T-cell (primary cell): ENCODE measurements at regions of chr20 and their contacts with region 1.

Region 1: DNA sequence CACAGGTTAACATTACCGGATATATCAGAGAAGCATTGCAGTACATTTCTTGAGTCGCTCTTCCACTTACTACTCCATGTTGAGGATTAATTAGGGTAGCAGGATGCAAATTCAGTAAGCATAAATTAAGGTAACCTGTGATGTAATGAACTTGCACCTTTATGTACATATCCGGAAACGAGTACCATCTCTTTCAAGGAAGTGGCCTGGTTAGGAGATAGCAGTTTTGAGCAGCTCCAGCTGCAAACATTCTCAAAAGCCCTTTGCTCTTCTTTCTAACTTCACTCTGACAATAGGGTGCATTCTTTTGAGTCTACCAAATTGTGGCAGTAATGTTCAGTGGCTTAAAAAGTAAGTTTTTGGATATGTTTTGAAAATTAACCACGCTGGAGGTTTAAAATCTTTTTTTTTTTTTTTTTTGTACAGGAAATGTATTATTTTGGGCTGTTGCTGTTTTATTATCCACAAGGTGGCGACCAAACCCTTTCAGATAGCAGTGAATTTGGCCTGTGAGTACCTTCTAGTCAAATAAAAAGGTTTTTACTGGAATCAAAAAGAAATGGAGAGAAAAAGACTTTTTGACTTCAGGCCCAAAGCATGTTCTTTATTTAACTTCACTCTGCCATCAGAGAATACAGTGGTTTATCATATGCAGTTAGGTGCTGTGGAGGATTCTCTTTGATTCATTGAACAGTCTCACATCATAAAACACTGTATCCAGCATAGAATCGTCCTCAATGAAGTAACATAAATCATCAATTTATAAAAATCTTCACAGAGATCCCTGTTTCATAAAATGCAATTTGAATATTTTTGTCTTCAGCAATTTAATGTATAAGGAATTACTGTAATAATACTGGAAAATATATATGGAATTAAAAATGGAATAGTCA is 8.9 kb downstream of the FAM217B start:
- DNase-seq: peak in 19 of 35 experiments; percentile 11 to 81 (median 34)
- ATAC-seq: peak; percentile 80 to 93 (median 89)
- H3K4me3 ChIP-seq: no peak overlapping the region
- H3K4me3 Mint-ChIP-seq: peak overlapping the region; percentile 56 to 62 (median 60)
- H3K27ac ChIP-seq: peak overlapping the region; percentile 55
- H3K27ac Mint-ChIP-seq: peak overlapping the region; percentile 95 to 97
- H3K4me1 ChIP-seq: peaks cover 5 to 6% of the 10 kb centered on the region in 2 experiments
- H3K4me1 Mint-ChIP-seq: peaks cover 22 to 33% (median 24%) of the 10 kb centered on the region in 3 donors
- H3K27me3 ChIP-seq: no peaks in the 10 kb centered on the region
- H3K27me3 Mint-ChIP-seq: no peaks in the 10 kb centered on the region

Region 2: GRCh38 chr20:59802471-59803221 is 146.4 kb before region 1 on chr20:
- CTCF ChIA-PET with region 1: no interaction called
- POLR2A ChIA-PET with region 1: no interaction called
- DNase-seq: peak in 1 of 35 experiments; percentile 8
- ATAC-seq: no peak
- H3K4me3 ChIP-seq: no peak overlapping the region
- H3K4me3 Mint-ChIP-seq: no peak overlapping the region
- H3K27ac ChIP-seq: no peak overlapping the region
- H3K27ac Mint-ChIP-seq: no peak overlapping the region
- H3K4me1 ChIP-seq: no peaks in the 10 kb centered on the region
- H3K4me1 Mint-ChIP-seq: no peaks in the 10 kb centered on the region
- H3K27me3 ChIP-seq: peaks cover 0 to 23% of the 10 kb centered on the region in 2 experiments
- H3K27me3 Mint-ChIP-seq: peaks cover 19 to 20% of the 10 kb centered on the region in 2 donors

Region 3: GRCh38 chr20:59933849-59934596 is 15.1 kb before region 1 on chr20:
- CTCF ChIA-PET with region 1: interaction called, 5 to 12 read pairs
- POLR2A ChIA-PET with region 1: no interaction called
- DNase-seq: peak; percentile 39 to 88 (median 67)
- ATAC-seq: peak; percentile 74 to 82 (median 80)
- H3K4me3 ChIP-seq: peak overlapping the region; percentile 67 to 80
- H3K4me3 Mint-ChIP-seq: peak overlapping the region; percentile 71 to 79 (median 79)
- H3K27ac ChIP-seq: no peak overlapping the region
- H3K27ac Mint-ChIP-seq: peak overlapping the region in 1 of 2 donors; percentile 43
- H3K4me1 ChIP-seq: peaks cover 5 to 18% of the 10 kb centered on the region in 2 experiments
- H3K4me1 Mint-ChIP-seq: peaks cover 24 to 43% (median 43%) of the 10 kb centered on the region in 3 donors
- H3K27me3 ChIP-seq: no peaks in the 10 kb centered on the region
- H3K27me3 Mint-ChIP-seq: no peaks in the 10 kb centered on the region

Region 4: DNA sequence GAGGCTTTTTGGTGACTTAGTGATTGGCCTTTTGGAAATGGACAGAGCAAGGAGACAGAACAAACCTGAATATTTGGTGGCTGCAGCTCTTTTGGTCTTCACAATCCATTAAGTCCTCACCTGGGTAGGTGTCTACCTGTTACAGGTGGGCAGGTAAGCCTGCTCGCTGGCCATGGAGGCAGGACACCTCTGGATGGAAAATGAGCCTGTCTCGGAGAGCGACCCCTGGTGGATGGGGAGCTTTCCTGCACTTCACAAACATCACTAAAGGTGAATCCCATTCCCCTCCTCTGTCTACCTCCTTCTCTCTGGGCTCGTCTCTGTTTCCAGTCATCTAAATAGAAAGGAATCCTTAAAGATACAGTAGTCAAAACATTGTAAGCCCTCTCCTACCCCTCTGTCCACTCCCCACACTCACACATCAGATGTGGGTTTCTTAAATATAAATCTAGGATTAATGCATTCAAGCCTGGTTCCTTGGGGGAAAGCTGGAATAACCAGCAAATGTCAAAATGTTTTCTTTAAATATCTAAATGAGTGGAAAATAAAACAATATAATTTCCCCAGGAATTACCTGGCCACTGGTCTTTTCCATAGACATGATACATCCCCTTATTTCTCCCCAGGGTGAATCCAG is 314.0 kb after region 1 on chr20:
- CTCF ChIA-PET with region 1: interaction called, 4 to 15 read pairs
- POLR2A ChIA-PET with region 1: interaction called in 1 of 2 experiments, 3 read pairs
- DNase-seq: peak in 33 of 35 experiments; percentile 4 to 72 (median 42)
- ATAC-seq: peak in 1 of 4 experiments; percentile 38
- H3K4me3 ChIP-seq: no peak overlapping the region
- H3K4me3 Mint-ChIP-seq: no peak overlapping the region
- H3K27ac ChIP-seq: no peak overlapping the region
- H3K27ac Mint-ChIP-seq: no peak overlapping the region
- H3K4me1 ChIP-seq: peaks cover 10 to 18% of the 10 kb centered on the region in 2 experiments
- H3K4me1 Mint-ChIP-seq: peaks cover 18 to 27% (median 22%) of the 10 kb centered on the region in 3 donors
- H3K27me3 ChIP-seq: no peaks in the 10 kb centered on the region
- H3K27me3 Mint-ChIP-seq: no peaks in the 10 kb centered on the region